ENCODE measurements at regions of chr9 and their contacts with region 1.

Region 1: GRCh38 chr9:129584136-129584535 is 36.8 kb downstream of the C9orf50 start:
- DNase-seq: peak; percentile 61
- H3K4me3 Mint-ChIP-seq: no peak overlapping the region
- H3K27ac Mint-ChIP-seq: peak overlapping the region; percentile 77
- H3K4me1 Mint-ChIP-seq: peaks cover 67% of the 10 kb centered on the region
- H3K27me3 Mint-ChIP-seq: peaks cover 5% of the 10 kb centered on the region

Region 2: GRCh38 chr9:129495534-129496325 is 88.4 kb before region 1 on chr9:
- intact Hi-C with region 1: loop called (anchors 1 kb)
- DNase-seq: peak; percentile 75
- H3K4me3 Mint-ChIP-seq: peak overlapping the region; percentile 74
- H3K27ac Mint-ChIP-seq: peak overlapping the region; percentile 65
- H3K4me1 Mint-ChIP-seq: peaks cover 29% of the 10 kb centered on the region
- H3K27me3 Mint-ChIP-seq: no peaks in the 10 kb centered on the region

Region 3: DNA sequence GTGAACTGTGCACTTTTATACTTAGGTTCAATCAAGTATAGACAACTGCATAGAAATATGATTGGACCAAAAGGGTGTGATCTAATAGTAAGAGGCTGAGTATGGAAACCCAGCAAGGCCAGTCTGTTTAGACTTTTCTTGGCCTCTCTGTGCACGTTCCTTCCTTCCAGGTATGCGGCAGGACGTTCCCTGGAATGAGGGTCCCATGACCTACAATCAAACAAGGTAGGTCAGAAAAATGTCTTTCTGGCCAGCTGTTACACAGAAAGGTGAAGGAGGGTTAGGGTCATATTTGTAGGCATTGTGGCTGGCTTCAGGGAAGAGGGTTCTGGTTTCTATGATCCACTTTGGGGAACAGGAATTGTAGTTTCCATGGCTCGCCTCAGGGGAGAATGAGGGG is 48.1 kb before region 1 on chr9:
- intact Hi-C with region 1: no loop called
- DNase-seq: no peak
- H3K4me3 Mint-ChIP-seq: no peak overlapping the region
- H3K27ac Mint-ChIP-seq: no peak overlapping the region
- H3K4me1 Mint-ChIP-seq: no peaks in the 10 kb centered on the region
- H3K27me3 Mint-ChIP-seq: peaks cover 22% of the 10 kb centered on the region

Region 4: DNA sequence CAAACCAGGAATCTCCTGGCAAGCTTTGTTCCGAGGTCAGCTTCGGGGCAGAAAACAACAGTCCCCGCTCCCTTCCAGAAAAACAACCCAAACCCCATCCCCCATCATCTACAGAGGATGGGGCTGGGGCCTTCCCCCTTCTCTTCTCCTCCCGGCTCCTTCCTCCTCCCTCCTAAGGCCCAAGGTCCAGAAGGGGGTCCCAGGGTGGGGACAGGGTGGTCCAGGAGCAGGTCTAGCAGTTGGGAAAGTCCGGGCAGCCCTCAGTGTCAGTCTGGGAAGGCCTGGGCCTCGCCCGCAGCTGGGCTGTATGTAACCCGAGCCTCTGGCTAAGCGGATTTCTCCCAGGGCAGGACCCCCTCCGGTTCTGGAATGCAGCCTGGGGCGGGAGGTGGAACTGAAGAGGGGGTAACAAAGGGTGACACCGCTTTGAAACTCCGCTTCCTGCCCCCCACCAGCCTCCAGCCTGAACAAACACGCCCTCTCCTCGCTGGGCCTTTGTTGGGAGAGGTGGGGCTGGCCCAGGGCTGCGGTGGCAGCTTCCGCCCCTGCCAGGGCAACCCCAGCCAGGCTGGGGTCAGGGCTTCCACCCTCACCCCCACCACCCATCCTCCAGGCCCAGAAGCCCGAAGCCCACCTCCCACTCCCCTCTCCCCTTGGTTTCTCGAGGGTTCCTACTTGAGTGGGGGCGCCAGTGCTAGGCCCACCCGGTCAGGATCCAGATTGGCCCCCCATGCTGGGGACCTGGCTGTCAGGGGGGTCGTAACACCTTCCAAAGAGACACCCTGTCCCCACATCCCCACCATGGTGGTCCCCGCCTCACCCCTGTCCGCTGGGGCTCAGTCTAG is 26.7 kb before region 1 on chr9:
- intact Hi-C with region 1: no loop called
- DNase-seq: no peak
- H3K4me3 Mint-ChIP-seq: no peak overlapping the region
- H3K27ac Mint-ChIP-seq: no peak overlapping the region
- H3K4me1 Mint-ChIP-seq: no peaks in the 10 kb centered on the region
- H3K27me3 Mint-ChIP-seq: peaks cover 10% of the 10 kb centered on the region

Region 5: GRCh38 chr9:129702589-129703520 is 118.7 kb after region 1 on chr9:
- intact Hi-C with region 1: no loop called
- DNase-seq: no peak
- H3K4me3 Mint-ChIP-seq: no peak overlapping the region
- H3K27ac Mint-ChIP-seq: no peak overlapping the region
- H3K4me1 Mint-ChIP-seq: no peaks in the 10 kb centered on the region
- H3K27me3 Mint-ChIP-seq: peaks cover 9% of the 10 kb centered on the region